ENCODE measurements at regions of chr19 and their contacts with region 1.

Region 1: DNA sequence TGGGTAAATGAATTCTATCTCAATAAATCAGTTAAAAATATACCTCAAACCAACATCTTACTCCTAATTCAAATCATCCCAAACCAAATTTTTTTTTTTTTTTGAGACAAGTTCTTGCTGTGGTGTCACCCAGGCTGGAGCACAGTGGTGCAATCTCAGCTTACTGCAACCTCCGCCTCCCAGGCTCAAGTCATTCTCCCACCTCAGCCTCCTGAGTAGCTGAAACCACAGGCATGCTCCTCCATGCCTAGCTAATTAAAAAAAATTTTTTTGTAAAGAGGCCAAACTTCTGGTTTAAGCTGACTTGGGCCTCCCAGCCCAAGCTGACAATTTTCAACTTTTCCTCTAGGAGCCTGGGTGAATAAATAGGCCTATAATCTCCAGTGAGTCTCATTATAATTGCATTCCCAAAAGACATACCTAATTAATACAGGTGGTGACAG is 22.1 kb upstream of the OLFM2 start:
- DNase-seq: no peak
- ATAC-seq: no peak
- H3K4me3 ChIP-seq: no peak overlapping the region
- H3K27ac ChIP-seq: no peak overlapping the region
- H3K4me1 ChIP-seq: no peaks in the 10 kb centered on the region
- H3K27me3 ChIP-seq: no peaks in the 10 kb centered on the region
- CTCF ChIP-seq: no peak
- POLR2A ChIP-seq: no peak
- RAD21 ChIP-seq: no peak

Region 2: GRCh38 chr19:10007371-10008183 is 49.2 kb after region 1 on chr19:
- CTCF ChIA-PET with region 1: interaction called, 10 read pairs
- POLR2A ChIA-PET with region 1: no interaction called
- RAD21 ChIA-PET with region 1: no interaction called
- intact Hi-C with region 1: no loop called
- DNase-seq: no peak
- ATAC-seq: no peak
- H3K4me3 ChIP-seq: no peak overlapping the region
- H3K27ac ChIP-seq: no peak overlapping the region
- H3K4me1 ChIP-seq: peaks cover 0 to 23% of the 10 kb centered on the region in 2 experiments; a peak in 2 of 4 replicates
- H3K27me3 ChIP-seq: peaks cover 37% of the 10 kb centered on the region; the same call in 1 of the 2 replicates
- CTCF ChIP-seq: no peak
- POLR2A ChIP-seq: no peak
- RAD21 ChIP-seq: no peak